ENCODE measurements at regions of chr20 and their contacts with region 1.

Region 1: DNA sequence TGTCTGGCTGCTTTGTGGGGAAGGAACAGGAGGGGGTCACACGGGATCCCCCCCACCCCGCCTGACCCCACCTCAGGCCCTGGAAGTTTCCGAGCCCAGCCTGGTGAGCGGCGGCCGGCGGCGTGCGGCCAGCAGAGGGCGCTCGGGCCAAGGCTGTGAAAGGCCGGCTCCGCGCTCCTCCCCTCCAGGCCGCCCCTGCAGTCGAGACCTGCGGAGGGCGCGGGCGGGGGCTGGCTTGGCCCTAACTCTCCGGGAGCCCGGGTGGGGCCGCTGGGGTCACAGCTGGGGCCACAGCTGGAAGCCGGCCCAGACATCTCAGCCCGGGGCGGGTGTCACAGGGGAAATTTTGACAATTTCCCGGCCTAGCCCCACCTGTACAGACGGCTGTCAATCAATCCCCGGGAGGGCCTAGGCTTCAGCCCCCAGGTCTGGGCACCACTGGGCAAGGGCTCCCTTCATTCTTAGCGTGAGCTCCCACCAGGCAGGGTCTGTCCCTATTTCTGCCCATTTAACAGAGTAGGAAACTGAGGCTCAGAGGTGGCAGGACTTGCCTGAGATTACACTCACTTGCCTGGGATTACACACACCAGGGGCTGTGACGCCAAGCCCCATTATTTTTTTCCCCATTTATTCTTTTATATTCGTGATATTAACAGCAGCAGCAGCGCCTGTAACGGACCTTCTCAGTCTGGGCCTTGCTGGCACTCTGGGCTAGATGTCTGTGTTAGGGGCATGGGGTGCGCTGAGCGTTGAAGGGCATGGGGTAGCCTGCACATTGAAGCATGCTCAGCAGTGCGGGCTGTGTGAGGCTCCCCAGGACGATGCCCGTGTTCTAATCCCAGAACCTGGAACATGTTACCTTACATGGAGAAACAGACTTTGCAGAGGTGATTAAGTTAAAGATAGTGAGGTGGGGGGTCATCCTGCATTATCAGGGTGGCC is 23.0 kb downstream of the ZBP1 start:
- DNase-seq: no peak
- H3K4me3 ChIP-seq: no peak overlapping the region
- H3K27ac ChIP-seq: no peak overlapping the region
- H3K27me3 ChIP-seq: peaks cover 5% of the 10 kb centered on the region
- CTCF ChIP-seq: peak; percentile 77

Region 2: GRCh38 chr20:57514273-57514751 is 83.0 kb before region 1 on chr20:
- CTCF ChIA-PET with region 1: interaction called, 114 read pairs
- POLR2A ChIA-PET with region 1: no interaction called
- DNase-seq: peak; percentile 44
- H3K4me3 ChIP-seq: no peak overlapping the region
- H3K27ac ChIP-seq: no peak overlapping the region
- H3K27me3 ChIP-seq: peaks cover 4% of the 10 kb centered on the region
- CTCF ChIP-seq: peak; percentile 78

Region 3: DNA sequence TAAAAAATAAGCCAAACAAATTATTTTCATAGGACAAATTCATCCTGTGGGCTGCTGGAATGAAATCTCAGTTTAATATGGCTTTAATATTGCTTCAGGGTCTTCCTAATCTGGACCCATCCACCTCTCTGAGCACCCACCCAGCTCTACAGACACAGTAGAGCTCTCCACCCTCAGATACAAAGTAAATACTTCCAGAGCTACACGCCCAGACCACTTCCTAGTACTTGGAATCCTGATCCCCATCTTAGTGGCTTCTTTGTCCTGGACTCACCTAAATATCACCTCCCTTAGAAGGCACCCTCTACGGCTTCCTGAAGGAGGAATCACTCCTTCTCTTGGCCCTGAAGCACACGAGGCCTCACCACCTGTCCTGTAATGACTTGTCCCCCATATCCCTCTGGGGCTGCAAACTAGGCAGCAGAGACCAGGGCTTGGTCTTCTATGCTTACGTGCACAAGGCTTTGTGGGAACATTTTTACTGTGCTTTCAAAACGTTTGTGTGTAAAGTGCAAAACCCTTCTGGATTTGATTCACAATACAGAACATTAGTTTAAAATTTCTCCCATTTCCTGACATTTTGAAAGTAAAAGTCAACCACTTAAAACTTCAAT is 74.8 kb before region 1 on chr20:
- CTCF ChIA-PET with region 1: interaction called, 114 read pairs
- POLR2A ChIA-PET with region 1: no interaction called
- DNase-seq: no peak
- H3K4me3 ChIP-seq: no peak overlapping the region
- H3K27ac ChIP-seq: no peak overlapping the region
- H3K27me3 ChIP-seq: peaks cover 6% of the 10 kb centered on the region
- CTCF ChIP-seq: no peak

Region 4: DNA sequence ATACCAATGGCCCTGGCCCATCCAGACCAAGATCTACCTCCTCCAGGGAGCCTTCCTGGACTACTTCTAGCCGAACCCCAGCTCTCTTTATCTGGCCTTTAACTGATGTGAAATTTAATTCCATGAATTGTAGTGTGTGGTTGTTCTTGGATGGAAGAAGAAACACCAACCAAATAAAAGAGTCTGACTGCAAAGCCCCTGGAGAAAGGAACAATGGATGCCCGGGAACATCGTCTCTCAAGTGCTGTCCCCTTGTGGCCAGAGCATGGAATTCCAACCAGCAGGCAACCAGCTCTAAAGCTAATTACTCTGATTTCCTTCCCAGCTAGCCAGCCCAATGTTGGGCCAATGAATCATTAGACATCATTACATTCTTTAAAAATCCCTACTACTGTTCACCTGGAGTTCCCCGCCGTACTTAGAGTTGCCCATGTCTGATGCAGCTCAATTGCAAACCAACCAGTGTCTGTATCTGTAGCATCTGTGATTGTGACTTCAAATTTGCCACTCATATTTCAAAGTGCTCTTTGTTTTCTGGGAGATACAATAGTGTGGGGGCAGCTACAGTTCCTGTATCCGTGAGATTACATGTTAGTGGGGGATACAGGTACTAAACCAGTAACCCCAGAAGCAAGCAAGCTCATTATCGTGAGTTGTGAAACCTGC is 490.1 kb after region 1 on chr20:
- CTCF ChIA-PET with region 1: interaction called, 15 read pairs
- POLR2A ChIA-PET with region 1: no interaction called
- DNase-seq: no peak
- H3K4me3 ChIP-seq: no peak overlapping the region
- H3K27ac ChIP-seq: no peak overlapping the region
- H3K27me3 ChIP-seq: peaks cover 2% of the 10 kb centered on the region
- CTCF ChIP-seq: peak; percentile 77

Region 5: DNA sequence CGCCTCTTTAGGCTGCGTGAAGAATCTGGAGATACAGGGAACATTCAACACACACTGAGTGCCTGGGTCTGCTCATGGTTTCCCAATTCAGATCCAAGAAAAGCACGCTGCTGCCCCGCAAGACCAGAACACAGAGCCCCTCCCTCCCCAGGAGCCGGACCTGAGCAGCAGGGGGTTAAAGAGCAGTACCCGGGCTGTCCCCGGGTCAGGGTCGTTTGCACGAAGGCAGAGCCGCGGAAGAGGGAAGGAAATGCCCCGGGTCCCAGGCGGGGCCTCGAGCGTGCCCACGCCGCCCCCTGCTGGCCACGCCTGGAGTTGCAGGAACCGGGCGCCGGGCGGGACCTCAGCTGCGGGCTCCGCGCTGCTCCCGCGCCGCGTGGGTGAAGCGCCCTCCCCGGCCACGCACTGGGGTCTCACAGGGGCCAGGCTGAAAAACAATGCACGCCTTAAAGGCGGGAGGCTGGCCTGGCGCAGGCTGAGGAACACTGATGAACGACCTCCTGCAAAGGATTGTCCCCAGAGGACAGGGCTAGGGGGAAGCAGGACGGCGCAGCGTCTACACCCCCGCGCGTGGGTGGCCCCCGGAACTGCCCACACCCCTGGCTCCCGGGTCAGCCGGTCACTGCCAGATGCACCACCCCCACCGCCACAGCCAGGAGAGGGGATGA is 582.3 kb after region 1 on chr20:
- CTCF ChIA-PET with region 1: interaction called, 12 read pairs
- POLR2A ChIA-PET with region 1: no interaction called
- DNase-seq: no peak
- H3K4me3 ChIP-seq: peak overlapping the region; percentile 46
- H3K27ac ChIP-seq: no peak overlapping the region
- H3K27me3 ChIP-seq: peaks cover 24% of the 10 kb centered on the region
- CTCF ChIP-seq: peak; percentile 86

Region 6: DNA sequence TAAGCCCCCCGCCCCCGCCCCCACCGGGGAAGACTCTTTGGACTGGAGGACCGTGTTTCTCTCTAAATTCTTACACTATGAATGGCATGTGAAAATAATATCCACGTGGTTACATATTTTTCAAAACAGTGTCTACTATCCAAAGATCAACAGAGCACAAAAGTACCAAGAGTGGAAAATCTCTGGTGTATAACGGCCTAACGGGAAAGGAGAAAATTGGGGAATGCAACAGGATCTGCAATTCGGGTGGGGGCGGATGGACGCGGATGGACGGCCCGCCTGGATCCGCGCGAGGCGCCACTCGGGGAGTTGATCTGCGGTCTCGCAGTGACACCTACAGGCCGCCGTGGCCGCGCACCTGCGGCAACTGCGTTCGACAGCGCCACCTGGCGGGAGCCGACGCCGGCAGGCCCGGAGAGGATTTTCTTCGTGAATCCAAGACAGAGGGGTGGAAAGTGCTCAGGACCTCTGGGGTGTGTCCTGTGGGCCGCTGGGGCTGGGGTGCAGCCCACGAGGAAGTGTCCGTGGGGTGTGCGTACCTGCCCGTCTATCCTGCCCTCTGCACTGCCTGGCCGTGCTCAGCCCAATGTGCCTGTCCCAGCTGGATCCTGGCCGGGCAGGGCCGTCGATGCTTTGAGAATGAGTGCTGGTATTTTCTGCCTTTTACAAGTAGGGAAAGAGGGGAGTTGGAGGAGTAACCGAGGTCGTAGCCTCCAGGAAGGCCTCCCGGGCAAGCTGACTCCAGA is 612.6 kb after region 1 on chr20:
- CTCF ChIA-PET with region 1: interaction called, 66 read pairs
- POLR2A ChIA-PET with region 1: no interaction called
- DNase-seq: peak; percentile 48
- H3K4me3 ChIP-seq: no peak overlapping the region
- H3K27ac ChIP-seq: no peak overlapping the region
- H3K27me3 ChIP-seq: peaks cover 7% of the 10 kb centered on the region
- CTCF ChIP-seq: peak; percentile 100